ENCODE measurements at regions of chr1 and their contacts with region 1.

Region 1: DNA sequence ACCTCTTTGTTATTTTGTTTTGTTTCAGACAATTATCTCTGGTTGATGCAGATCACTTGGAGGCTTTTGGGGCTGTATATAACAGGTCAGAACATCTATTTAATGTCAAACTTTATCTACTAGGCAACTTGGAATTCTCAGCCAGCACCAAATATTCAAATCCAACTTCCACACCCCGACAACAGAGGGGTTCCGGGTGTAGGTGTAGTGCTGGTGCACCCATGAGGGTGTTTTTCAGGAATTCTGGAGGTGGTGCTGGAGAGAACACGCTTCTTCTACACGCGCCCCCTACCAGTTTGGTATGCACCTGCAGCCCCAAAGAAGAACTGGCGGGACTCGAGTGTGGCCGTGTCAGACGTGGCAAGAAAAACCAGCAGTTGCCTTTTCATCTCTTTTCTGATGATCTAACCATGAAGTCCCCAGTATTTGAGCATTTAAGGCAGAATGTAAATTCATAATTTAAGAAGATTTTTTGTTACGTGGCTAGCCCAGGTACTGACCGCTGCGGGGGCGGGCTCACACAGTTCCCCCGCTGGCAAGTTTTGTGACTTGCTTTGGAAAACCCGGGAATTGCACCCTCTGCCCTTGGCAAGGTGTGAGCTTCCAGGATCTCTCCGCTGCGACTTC is 462 bp upstream of the TLCD4 start:
- DNase-seq: peak; percentile 77
- ATAC-seq: peak; percentile 82
- H3K4me3 ChIP-seq: peak overlapping the region; percentile 72 to 92 (median 89)
- H3K27ac ChIP-seq: peak overlapping the region; percentile 88
- H3K4me1 ChIP-seq: peaks cover 55% of the 10 kb centered on the region
- H3K27me3 ChIP-seq: no peaks in the 10 kb centered on the region; a peak in 1 of 5 replicates
- CTCF ChIP-seq: peak; percentile 83
- EP300 ChIP-seq: no peak
- POLR2A ChIP-seq: no peak
- RAD21 ChIP-seq: peak; percentile 33

Region 2: GRCh38 chr1:95067062-95067461 is 49.6 kb before region 1 on chr1:
- CTCF ChIA-PET with region 1: no interaction called
- POLR2A ChIA-PET with region 1: interaction called, 6 read pairs
- in situ Hi-C with region 1: loop called (anchors 10 kb)
- intact Hi-C with region 1: loop called (anchors 2 kb)
- DNase-seq: peak; percentile 71
- ATAC-seq: peak; percentile 57
- H3K4me3 ChIP-seq: peak overlapping the region in 1 of 3 experiments; percentile 13; a peak in 1 of 6 replicates
- H3K27ac ChIP-seq: peak overlapping the region; percentile 86
- H3K4me1 ChIP-seq: peaks cover 64% of the 10 kb centered on the region
- H3K27me3 ChIP-seq: no peaks in the 10 kb centered on the region
- CTCF ChIP-seq: no peak
- EP300 ChIP-seq: peak in 1 of 2 experiments; percentile 93; a peak in 2 of 4 replicates
- POLR2A ChIP-seq: no peak
- RAD21 ChIP-seq: no peak

Region 3: GRCh38 chr1:95084317-95085176 is 32.1 kb before region 1 on chr1:
- CTCF ChIA-PET with region 1: interaction called, 8 read pairs
- POLR2A ChIA-PET with region 1: interaction called, 7 read pairs
- in situ Hi-C with region 1: loop called (anchors 10 kb)
- intact Hi-C with region 1: loop called (anchors 2 kb)
- DNase-seq: peak; percentile 80
- ATAC-seq: peak; percentile 90
- H3K4me3 ChIP-seq: no peak overlapping the region
- H3K27ac ChIP-seq: no peak overlapping the region
- H3K4me1 ChIP-seq: peaks cover 48% of the 10 kb centered on the region
- H3K27me3 ChIP-seq: no peaks in the 10 kb centered on the region; a peak in 1 of 5 replicates
- CTCF ChIP-seq: peak; percentile 75
- EP300 ChIP-seq: peak in 1 of 2 experiments; percentile 34; a peak in 1 of 4 replicates
- POLR2A ChIP-seq: no peak
- RAD21 ChIP-seq: peak; percentile 37; the same call in 1 of the 2 replicates

Region 4: DNA sequence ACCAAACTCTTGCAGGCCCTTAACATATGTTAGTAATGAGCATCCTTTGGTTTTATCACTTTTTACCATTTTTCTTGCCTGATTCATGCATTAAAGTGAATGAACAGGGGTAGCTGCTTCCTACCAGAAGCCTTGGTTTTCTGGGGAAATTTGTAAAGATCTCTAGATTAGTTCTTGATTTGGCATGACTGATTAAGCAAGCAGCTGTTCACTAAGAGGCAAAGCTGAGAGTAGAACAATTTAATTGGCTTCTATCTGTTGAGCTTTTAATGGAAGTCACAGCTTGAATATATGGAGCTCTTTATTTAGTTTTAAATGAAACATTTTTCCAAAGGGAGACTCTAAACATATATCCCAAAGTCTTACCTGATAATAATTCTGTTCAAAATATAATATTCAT is 24.1 kb after region 1 on chr1:
- CTCF ChIA-PET with region 1: no interaction called
- POLR2A ChIA-PET with region 1: no interaction called
- in situ Hi-C with region 1: no loop called
- intact Hi-C with region 1: loop called (anchors 2 kb)
- DNase-seq: no peak
- ATAC-seq: no peak
- H3K4me3 ChIP-seq: no peak overlapping the region
- H3K27ac ChIP-seq: no peak overlapping the region
- H3K4me1 ChIP-seq: peaks cover 4% of the 10 kb centered on the region
- H3K27me3 ChIP-seq: no peaks in the 10 kb centered on the region
- CTCF ChIP-seq: no peak
- EP300 ChIP-seq: no peak
- POLR2A ChIP-seq: no peak
- RAD21 ChIP-seq: no peak